ENCODE measurements at regions of chr1 and their contacts with region 1.

Region 1: GRCh38 chr1:84690397-84691121 is at the start of gene SSX2IP:
- DNase-seq: peak; percentile 98 to 100
- ATAC-seq: peak; percentile 98
- H3K4me3 ChIP-seq: peak within 1 kb of the TSS; percentile 65 to 97
- H3K27ac ChIP-seq: peak within 1 kb of the TSS; percentile 0 to 84
- H3K4me1 ChIP-seq: no peaks in the 10 kb centered on the region
- H3K27me3 ChIP-seq: no peaks in the 10 kb centered on the region
- total RNA-seq, gene SSX2IP: 8.2 to 11.9 TPM

Region 2: GRCh38 chr1:84724128-84724860 is 33.7 kb after region 1 on chr1:
- intact Hi-C with region 1: loop called in 1 of 2 experiments (anchors 5 kb)
- DNase-seq: no peak
- ATAC-seq: no peak
- H3K4me3 ChIP-seq: no peak overlapping the region
- H3K27ac ChIP-seq: no peak overlapping the region
- H3K4me1 ChIP-seq: peaks cover 5% of the 10 kb centered on the region in 2 donors
- H3K27me3 ChIP-seq: no peaks in the 10 kb centered on the region

Region 3: DNA sequence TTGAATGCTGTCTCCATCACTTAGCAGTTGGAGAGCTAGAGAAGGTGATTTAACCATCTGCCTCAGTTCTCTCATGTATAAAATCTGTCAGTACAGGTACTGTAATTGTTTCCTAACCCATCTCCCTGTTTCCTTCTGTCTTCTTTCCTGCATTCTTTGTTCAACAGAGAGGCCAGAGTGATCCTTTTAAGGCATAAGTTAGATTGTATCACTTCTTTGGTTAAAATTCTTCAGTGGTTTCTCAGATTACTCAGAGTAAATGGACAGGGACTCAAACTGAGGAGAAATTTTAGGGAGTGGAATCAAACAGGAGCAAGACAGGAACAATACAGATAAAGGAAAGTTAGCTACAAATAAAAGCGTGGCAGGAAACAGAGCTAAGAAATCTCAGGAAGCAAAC is 44.9 kb after region 1 on chr1:
- intact Hi-C with region 1: loop called in 1 of 2 experiments (anchors 5 kb)
- DNase-seq: no peak
- ATAC-seq: no peak
- H3K4me3 ChIP-seq: no peak overlapping the region
- H3K27ac ChIP-seq: no peak overlapping the region
- H3K4me1 ChIP-seq: no peaks in the 10 kb centered on the region
- H3K27me3 ChIP-seq: no peaks in the 10 kb centered on the region

Measured in aorta (tissue), 5 donors.